Naive thymus-derived CD8-positive, alpha-beta T cell (primary cell): ENCODE measurements at regions of chr7 and their contacts with region 1.

Region 1: GRCh38 chr7:2477447-2478398 is 1.5 kb upstream of the GRIFIN start:
- DNase-seq: peak; percentile 33 to 81 (median 62)
- ATAC-seq: peak; percentile 96 to 98
- H3K4me3 Mint-ChIP-seq: peak overlapping the region in 2 of 10 donors; percentile 19 to 30
- H3K27ac Mint-ChIP-seq: peak overlapping the region in 1 of 10 donors; percentile 32
- H3K4me1 Mint-ChIP-seq: peaks cover 1 to 10% (median 8%) of the 10 kb centered on the region in 4 donors
- H3K27me3 Mint-ChIP-seq: peaks cover 0 to 1% (median 0%) of the 10 kb centered on the region in 5 donors

Region 2: GRCh38 chr7:2350055-2350454 is 127.7 kb before region 1 on chr7:
- POLR2A ChIA-PET with region 1: no interaction called
- DNase-seq: no peak
- ATAC-seq: no peak
- H3K4me3 Mint-ChIP-seq: no peak overlapping the region
- H3K27ac Mint-ChIP-seq: peak overlapping the region in 1 of 10 donors; percentile 27
- H3K4me1 Mint-ChIP-seq: peaks cover 0 to 16% (median 14%) of the 10 kb centered on the region in 4 donors
- H3K27me3 Mint-ChIP-seq: no peaks in the 10 kb centered on the region

Region 3: GRCh38 chr7:2529161-2530070 is 51.7 kb after region 1 on chr7:
- POLR2A ChIA-PET with region 1: interaction called, 13 read pairs
- DNase-seq: peak in 8 of 10 donors; percentile 52 to 79 (median 61)
- ATAC-seq: peak; percentile 26 to 44
- H3K4me3 Mint-ChIP-seq: peak overlapping the region; percentile 71 to 87 (median 80)
- H3K27ac Mint-ChIP-seq: peak overlapping the region; percentile 59 to 97 (median 93)
- H3K4me1 Mint-ChIP-seq: peaks cover 18 to 66% (median 65%) of the 10 kb centered on the region in 4 donors
- H3K27me3 Mint-ChIP-seq: no peaks in the 10 kb centered on the region